CD4-positive, alpha-beta memory T cell (primary cell): ENCODE measurements at regions of chr11 and their contacts with region 1.

Region 1: DNA sequence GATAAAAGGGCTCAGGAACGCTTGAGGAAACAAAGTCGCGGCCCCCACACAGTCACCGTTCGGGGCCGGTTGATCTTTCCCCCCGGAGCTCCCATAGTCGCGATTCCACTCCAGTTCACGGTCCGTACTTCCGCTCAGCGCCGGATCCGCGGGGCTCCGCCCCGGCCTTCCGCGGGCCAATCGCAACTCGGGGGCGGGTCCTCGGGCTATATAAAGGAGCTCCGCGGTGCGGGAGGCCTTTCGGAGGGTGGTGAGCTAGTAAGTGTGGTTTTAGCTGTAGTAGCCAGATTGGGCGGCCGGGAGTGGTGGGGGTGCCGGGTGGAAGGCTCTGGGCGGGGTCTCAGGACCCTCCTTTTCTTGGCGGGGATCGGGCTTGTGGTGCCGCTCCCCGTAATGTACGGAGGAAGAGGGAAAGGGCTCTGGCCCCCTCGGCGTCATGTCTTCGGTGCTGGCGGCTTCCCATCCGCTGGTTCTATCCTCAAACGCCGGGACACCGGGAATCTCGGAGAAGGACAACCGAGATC is at the starts of genes C11orf98 and CSKMT:
- DNase-seq: peak; percentile 94 to 96 (median 95)
- H3K4me3 ChIP-seq: peak within 1 kb of the TSS; percentile 88 to 97
- H3K4me3 Mint-ChIP-seq: peak within 1 kb of the TSS; percentile 92 to 98 (median 96)
- H3K27ac ChIP-seq: peak within 1 kb of the TSS; percentile 73
- H3K27ac Mint-ChIP-seq: peak within 1 kb of the TSS; percentile 95 to 98 (median 96)
- H3K4me1 ChIP-seq: peaks cover 42% of the 10 kb centered on the region
- H3K4me1 Mint-ChIP-seq: peaks cover 15 to 55% (median 31%) of the 10 kb centered on the region in 4 donors
- H3K27me3 ChIP-seq: no peaks in the 10 kb centered on the region
- H3K27me3 Mint-ChIP-seq: no peaks in the 10 kb centered on the region
- total RNA-seq, gene C11orf98: 48.9 to 53.1 TPM
- total RNA-seq, gene CSKMT: 31.4 to 32.3 TPM

Region 2: DNA sequence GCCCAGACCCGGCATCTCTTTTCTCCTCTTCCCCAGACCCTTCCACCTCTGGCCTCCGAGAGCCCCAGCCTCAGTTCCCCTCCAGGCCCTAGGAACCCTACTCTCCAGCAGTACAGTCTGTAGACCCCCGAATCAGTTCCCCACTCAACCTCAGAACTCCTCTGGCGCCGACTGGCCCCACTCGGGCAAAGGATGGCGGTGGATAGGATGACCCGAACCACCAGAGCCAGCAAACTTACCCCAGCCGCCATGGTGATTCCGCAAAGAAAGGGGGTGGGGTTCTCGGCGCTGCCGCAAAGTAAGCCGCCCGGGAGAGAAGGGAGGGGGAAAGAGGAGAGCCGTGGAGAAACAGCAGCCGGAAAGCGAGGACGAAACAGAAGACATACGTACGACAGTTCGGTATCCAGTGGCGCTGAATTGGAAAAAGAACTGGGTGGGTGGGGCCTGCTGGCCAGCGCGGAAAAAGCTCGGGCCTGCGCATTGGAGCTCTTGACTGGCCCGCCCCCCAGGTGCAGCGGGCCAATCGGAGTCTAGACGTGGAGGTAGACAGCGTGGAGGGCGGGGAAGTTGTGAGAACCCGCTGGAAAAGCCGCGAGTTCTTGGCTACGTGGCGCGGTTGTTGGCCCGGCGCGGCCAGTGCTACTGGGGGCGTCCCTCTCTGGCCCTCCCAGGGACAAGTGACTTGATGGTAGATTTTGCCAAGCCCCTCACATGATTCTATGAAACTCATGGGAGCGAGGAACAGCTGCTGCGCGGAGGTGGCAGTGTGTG is 91.4 kb before region 1 on chr11 and contains the start of gene EEF1G:
- CTCF ChIA-PET with region 1: interaction called, 3 read pairs
- POLR2A ChIA-PET with region 1: interaction called, 35 read pairs
- intact Hi-C with region 1: loop called (anchors 1 kb)
- DNase-seq: peak; percentile 98 to 100 (median 100)
- H3K4me3 ChIP-seq: peak within 1 kb of the TSS; percentile 89 to 100
- H3K4me3 Mint-ChIP-seq: peak within 1 kb of the TSS; percentile 92 to 98 (median 98)
- H3K27ac ChIP-seq: peak within 1 kb of the TSS; percentile 77
- H3K27ac Mint-ChIP-seq: peak within 1 kb of the TSS; percentile 94 to 98 (median 97)
- H3K4me1 ChIP-seq: peaks cover 44% of the 10 kb centered on the region
- H3K4me1 Mint-ChIP-seq: peaks cover 34 to 60% (median 47%) of the 10 kb centered on the region in 4 donors
- H3K27me3 ChIP-seq: no peaks in the 10 kb centered on the region
- H3K27me3 Mint-ChIP-seq: no peaks in the 10 kb centered on the region
- total RNA-seq, gene EEF1G: 1,815 to 1,855 TPM

Region 3: GRCh38 chr11:62621567-62622470 is 43.3 kb before region 1 on chr11 and contains the start of gene B3GAT3:
- CTCF ChIA-PET with region 1: interaction called, 4 read pairs
- POLR2A ChIA-PET with region 1: interaction called, 53 read pairs
- intact Hi-C with region 1: loop called (anchors 2 kb)
- DNase-seq: peak; percentile 95 to 99 (median 96)
- H3K4me3 ChIP-seq: peak within 1 kb of the TSS; percentile 83 to 89
- H3K4me3 Mint-ChIP-seq: peak within 1 kb of the TSS; percentile 89 to 98 (median 95)
- H3K27ac ChIP-seq: peak within 1 kb of the TSS; percentile 94
- H3K27ac Mint-ChIP-seq: peak within 1 kb of the TSS; percentile 91 to 99 (median 98)
- H3K4me1 ChIP-seq: peaks cover 26% of the 10 kb centered on the region
- H3K4me1 Mint-ChIP-seq: peaks cover 19 to 29% (median 20%) of the 10 kb centered on the region in 4 donors
- H3K27me3 ChIP-seq: no peaks in the 10 kb centered on the region
- H3K27me3 Mint-ChIP-seq: no peaks in the 10 kb centered on the region
- total RNA-seq, gene B3GAT3: 66.3 to 74.3 TPM

Region 4: GRCh38 chr11:62652161-62653006 is 12.8 kb before region 1 on chr11:
- CTCF ChIA-PET with region 1: interaction called, 24 read pairs
- POLR2A ChIA-PET with region 1: interaction called, 162 read pairs
- intact Hi-C with region 1: loop called (anchors 1 kb)
- DNase-seq: peak in 3 of 5 donors; percentile 54 to 83 (median 68)
- H3K4me3 ChIP-seq: peak overlapping the region; percentile 92 to 97
- H3K4me3 Mint-ChIP-seq: peak overlapping the region; percentile 86 to 94 (median 92)
- H3K27ac ChIP-seq: peak overlapping the region; percentile 93
- H3K27ac Mint-ChIP-seq: peak overlapping the region; percentile 78 to 100 (median 94)
- H3K4me1 ChIP-seq: peaks cover 24% of the 10 kb centered on the region
- H3K4me1 Mint-ChIP-seq: peaks cover 13 to 40% (median 22%) of the 10 kb centered on the region in 4 donors
- H3K27me3 ChIP-seq: no peaks in the 10 kb centered on the region
- H3K27me3 Mint-ChIP-seq: no peaks in the 10 kb centered on the region

Region 5: GRCh38 chr11:62726915-62727763 is 62.0 kb after region 1 on chr11 and contains the start of gene HNRNPUL2:
- CTCF ChIA-PET with region 1: interaction called, 3 read pairs
- POLR2A ChIA-PET with region 1: interaction called, 71 read pairs
- intact Hi-C with region 1: no loop called
- DNase-seq: peak; percentile 99
- H3K4me3 ChIP-seq: peak within 1 kb of the TSS; percentile 95 to 99
- H3K4me3 Mint-ChIP-seq: peak within 1 kb of the TSS; percentile 84 to 98 (median 96)
- H3K27ac ChIP-seq: peak within 1 kb of the TSS; percentile 93
- H3K27ac Mint-ChIP-seq: peak within 1 kb of the TSS; percentile 98 to 99 (median 99)
- H3K4me1 ChIP-seq: peaks cover 50% of the 10 kb centered on the region
- H3K4me1 Mint-ChIP-seq: peaks cover 28 to 84% (median 50%) of the 10 kb centered on the region in 4 donors
- H3K27me3 ChIP-seq: no peaks in the 10 kb centered on the region
- H3K27me3 Mint-ChIP-seq: no peaks in the 10 kb centered on the region
- total RNA-seq, gene HNRNPUL2: 79.6 to 83.4 TPM

Region 6: GRCh38 chr11:62831520-62832335 is 166.6 kb after region 1 on chr11 and contains the start of gene STX5:
- CTCF ChIA-PET with region 1: no interaction called
- POLR2A ChIA-PET with region 1: interaction called, 10 read pairs
- intact Hi-C with region 1: no loop called
- DNase-seq: peak; percentile 99 to 100 (median 100)
- H3K4me3 ChIP-seq: peak within 1 kb of the TSS; percentile 82 to 85
- H3K4me3 Mint-ChIP-seq: peak within 1 kb of the TSS; percentile 94 to 100 (median 98)
- H3K27ac ChIP-seq: peak within 1 kb of the TSS; percentile 97
- H3K27ac Mint-ChIP-seq: peak within 1 kb of the TSS; percentile 94 to 100 (median 99)
- H3K4me1 ChIP-seq: peaks cover 30% of the 10 kb centered on the region
- H3K4me1 Mint-ChIP-seq: peaks cover 21 to 59% (median 41%) of the 10 kb centered on the region in 4 donors
- H3K27me3 ChIP-seq: no peaks in the 10 kb centered on the region
- H3K27me3 Mint-ChIP-seq: no peaks in the 10 kb centered on the region
- total RNA-seq, gene STX5: 66.0 to 67.9 TPM

Region 7: DNA sequence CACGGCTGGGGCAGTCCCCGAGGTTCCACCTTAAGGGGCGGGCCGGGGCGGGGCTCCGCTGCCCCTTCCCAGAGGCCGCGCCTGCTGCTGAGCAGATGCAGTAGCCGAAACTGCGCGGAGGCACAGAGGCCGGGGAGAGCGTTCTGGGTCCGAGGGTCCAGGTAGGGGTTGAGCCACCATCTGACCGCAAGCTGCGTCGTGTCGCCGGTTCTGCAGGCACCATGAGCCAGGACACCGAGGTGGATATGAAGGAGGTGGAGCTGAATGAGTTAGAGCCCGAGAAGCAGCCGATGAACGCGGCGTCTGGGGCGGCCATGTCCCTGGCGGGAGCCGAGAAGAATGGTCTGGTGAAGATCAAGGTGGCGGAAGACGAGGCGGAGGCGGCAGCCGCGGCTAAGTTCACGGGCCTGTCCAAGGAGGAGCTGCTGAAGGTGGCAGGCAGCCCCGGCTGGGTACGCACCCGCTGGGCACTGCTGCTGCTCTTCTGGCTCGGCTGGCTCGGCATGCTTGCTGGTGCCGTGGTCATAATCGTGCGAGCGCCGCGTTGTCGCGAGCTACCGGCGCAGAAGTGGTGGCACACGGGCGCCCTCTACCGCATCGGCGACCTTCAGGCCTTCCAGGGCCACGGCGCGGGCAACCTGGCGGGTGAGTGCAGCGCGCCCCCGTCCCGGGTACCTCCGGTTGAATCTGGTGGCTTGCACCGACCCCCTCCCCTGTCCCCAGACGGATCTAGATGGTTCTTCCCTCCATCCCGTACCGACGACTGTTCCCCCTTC is 215.9 kb after region 1 on chr11 and contains the start of gene SLC3A2:
- CTCF ChIA-PET with region 1: interaction called, 4 read pairs
- POLR2A ChIA-PET with region 1: interaction called, 21 read pairs
- intact Hi-C with region 1: no loop called
- DNase-seq: peak; percentile 85 to 89 (median 88)
- H3K4me3 ChIP-seq: peak within 1 kb of the TSS; percentile 96 to 98
- H3K4me3 Mint-ChIP-seq: peak within 1 kb of the TSS; percentile 93 to 100 (median 100)
- H3K27ac ChIP-seq: peak within 1 kb of the TSS; percentile 93
- H3K27ac Mint-ChIP-seq: peak within 1 kb of the TSS; percentile 93 to 100 (median 99)
- H3K4me1 ChIP-seq: peaks cover 52% of the 10 kb centered on the region
- H3K4me1 Mint-ChIP-seq: peaks cover 26 to 60% (median 41%) of the 10 kb centered on the region in 4 donors
- H3K27me3 ChIP-seq: no peaks in the 10 kb centered on the region
- H3K27me3 Mint-ChIP-seq: no peaks in the 10 kb centered on the region
- total RNA-seq, gene SLC3A2: 205 to 215 TPM